Activated CD8-positive, alpha-beta T cell treated with anti-CD3 and anti-CD28 coated beads, Interleukin-2, amount 10 ng/mL, durations not matched to agents 7 days and 5 days (primary cell): ENCODE measurements at regions of chr15 and their contacts with region 1.

Region 1: GRCh38 chr15:74906446-74907162 is at the start of gene FAM219B:
- DNase-seq: peak; percentile 88
- ATAC-seq: peak; percentile 89
- H3K4me3 Mint-ChIP-seq: peak within 1 kb of the TSS; percentile 92
- H3K27ac Mint-ChIP-seq: peak within 1 kb of the TSS; percentile 92
- H3K4me1 Mint-ChIP-seq: peaks cover 40% of the 10 kb centered on the region
- H3K27me3 Mint-ChIP-seq: no peaks in the 10 kb centered on the region
- total RNA-seq, gene FAM219B: 61.3 to 72.5 TPM

Region 2: DNA sequence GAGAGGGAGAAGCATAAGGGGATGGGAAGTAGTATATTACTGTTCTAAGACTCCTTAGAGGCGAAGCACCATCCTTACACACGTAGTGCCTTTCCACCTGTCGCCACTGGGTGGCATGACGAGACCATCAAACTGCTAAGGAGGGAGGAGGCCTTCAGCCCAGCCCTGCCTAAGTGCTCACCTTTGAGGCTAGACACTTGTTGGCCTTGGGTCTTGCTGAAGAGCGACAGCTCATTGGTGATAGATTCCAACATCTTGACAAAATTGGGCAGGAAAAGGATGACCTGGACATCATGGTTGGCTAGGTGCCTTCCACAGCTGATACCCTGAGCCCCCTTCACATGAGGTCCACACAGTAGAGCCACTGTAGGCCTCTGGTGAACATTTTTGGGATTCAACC is 271.4 kb before region 1 on chr15:
- CTCF ChIA-PET with region 1: interaction called, 16 read pairs
- POLR2A ChIA-PET with region 1: no interaction called
- DNase-seq: peak; percentile 83
- ATAC-seq: peak; percentile 87
- H3K4me3 Mint-ChIP-seq: no peak overlapping the region
- H3K27ac Mint-ChIP-seq: no peak overlapping the region
- H3K4me1 Mint-ChIP-seq: no peaks in the 10 kb centered on the region
- H3K27me3 Mint-ChIP-seq: no peaks in the 10 kb centered on the region

Region 3: GRCh38 chr15:74787251-74788041 is 119.2 kb before region 1 on chr15:
- CTCF ChIA-PET with region 1: interaction called, 19 read pairs
- POLR2A ChIA-PET with region 1: interaction called, 5 read pairs
- DNase-seq: peak; percentile 97
- ATAC-seq: peak; percentile 72
- H3K4me3 Mint-ChIP-seq: peak overlapping the region; percentile 90
- H3K27ac Mint-ChIP-seq: peak overlapping the region; percentile 99
- H3K4me1 Mint-ChIP-seq: peaks cover 66% of the 10 kb centered on the region
- H3K27me3 Mint-ChIP-seq: no peaks in the 10 kb centered on the region

Region 4: DNA sequence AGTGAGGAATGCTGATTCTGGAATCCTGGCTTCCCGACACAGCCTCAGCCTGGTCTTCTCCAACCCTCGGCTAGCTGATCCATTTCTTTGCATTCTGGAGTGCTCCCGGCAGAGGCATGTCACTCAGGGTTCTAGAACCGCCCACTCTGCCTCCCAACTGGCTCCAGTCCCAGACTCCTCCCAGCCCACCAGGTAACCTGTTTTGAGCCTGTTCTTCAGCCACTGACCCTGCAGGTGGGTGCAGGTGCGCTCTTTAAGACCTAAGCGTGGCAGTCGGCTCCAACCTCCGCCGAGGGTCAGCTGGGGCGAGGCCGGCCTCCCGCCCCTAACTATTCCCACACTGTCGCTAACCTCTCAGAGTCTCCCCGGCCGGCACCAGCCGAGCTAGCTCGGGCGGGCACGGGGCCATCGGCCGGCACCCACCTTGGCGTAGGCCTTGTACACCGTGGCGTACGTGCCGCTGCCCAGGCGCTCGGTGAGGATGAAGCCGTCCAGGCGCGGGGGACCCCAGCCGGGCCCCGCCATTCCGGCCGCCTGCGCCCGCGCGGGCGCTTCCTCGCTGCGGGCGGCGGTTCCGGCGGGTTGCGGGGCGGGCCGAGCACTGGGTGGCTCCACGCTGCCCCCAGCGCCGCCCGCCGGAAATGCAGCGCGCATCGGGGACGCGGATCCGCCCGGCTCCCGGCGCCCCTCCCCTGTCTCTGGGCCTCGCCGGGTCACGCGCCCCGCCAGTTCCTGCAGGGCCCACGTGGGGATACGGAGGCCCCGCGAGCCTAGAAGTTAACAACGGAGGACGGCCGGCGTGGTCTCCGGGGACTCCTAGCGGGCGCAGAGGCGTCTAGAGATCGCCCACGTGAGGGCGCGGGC is 63.8 kb before region 1 on chr15 and contains the start of gene ULK3:
- CTCF ChIA-PET with region 1: interaction called, 75 read pairs
- POLR2A ChIA-PET with region 1: interaction called, 13 read pairs
- DNase-seq: peak; percentile 94
- ATAC-seq: peak; percentile 87
- H3K4me3 Mint-ChIP-seq: peak within 1 kb of the TSS; percentile 89
- H3K27ac Mint-ChIP-seq: peak within 1 kb of the TSS; percentile 93
- H3K4me1 Mint-ChIP-seq: peaks cover 49% of the 10 kb centered on the region
- H3K27me3 Mint-ChIP-seq: no peaks in the 10 kb centered on the region
- total RNA-seq, gene ULK3: 56.9 to 58.0 TPM

Region 5: DNA sequence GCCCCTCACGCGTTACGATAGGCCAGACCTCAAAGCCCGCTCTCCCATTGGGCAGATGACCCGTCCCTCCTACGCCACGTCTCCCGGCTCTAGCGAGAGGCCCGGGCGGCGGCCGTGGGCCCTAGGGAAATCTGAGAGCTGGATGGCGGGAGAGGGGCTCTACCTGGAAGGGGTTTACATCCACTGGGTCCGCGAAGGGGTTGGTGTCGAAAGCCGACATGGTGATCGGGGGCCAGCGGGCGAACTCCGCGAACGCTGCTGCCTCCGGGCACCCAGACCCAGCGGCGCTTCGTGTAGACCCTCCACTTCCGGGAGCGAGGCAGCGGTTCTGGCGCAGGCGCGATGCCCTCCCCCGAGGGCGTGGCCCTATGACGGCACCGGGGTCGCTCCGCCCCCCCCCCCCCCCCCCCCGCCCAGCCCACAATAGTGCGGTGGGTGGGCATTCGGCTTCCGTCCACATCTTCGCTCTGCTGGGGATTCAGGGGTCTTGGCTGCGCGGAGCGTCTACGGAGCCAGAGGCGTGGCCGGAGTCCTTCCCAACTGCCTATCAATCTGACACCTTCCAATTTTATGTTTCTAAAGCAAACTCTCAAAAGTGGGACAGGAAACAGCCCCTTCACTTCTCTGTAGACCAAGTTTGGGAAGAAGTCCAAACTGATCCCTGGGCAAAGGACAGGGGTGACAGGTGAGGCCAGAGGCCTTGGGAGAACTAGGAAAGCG is 33.4 kb before region 1 on chr15 and contains the start of gene SCAMP2:
- CTCF ChIA-PET with region 1: interaction called, 82 read pairs
- POLR2A ChIA-PET with region 1: interaction called, 18 read pairs
- DNase-seq: peak; percentile 95
- ATAC-seq: peak; percentile 96
- H3K4me3 Mint-ChIP-seq: peak within 1 kb of the TSS; percentile 99
- H3K27ac Mint-ChIP-seq: peak within 1 kb of the TSS; percentile 94
- H3K4me1 Mint-ChIP-seq: peaks cover 44% of the 10 kb centered on the region
- H3K27me3 Mint-ChIP-seq: peaks cover 6% of the 10 kb centered on the region
- total RNA-seq, gene SCAMP2: 96.9 to 105 TPM

Region 6: GRCh38 chr15:74889883-74890664 is 16.5 kb before region 1 on chr15 and contains the start of gene MPI:
- CTCF ChIA-PET with region 1: interaction called, 41 read pairs
- POLR2A ChIA-PET with region 1: interaction called, 6 read pairs
- DNase-seq: peak; percentile 90
- ATAC-seq: peak; percentile 97
- H3K4me3 Mint-ChIP-seq: peak within 1 kb of the TSS; percentile 91
- H3K27ac Mint-ChIP-seq: peak within 1 kb of the TSS; percentile 89
- H3K4me1 Mint-ChIP-seq: peaks cover 50% of the 10 kb centered on the region
- H3K27me3 Mint-ChIP-seq: no peaks in the 10 kb centered on the region
- total RNA-seq, gene MPI: 55.7 to 56.7 TPM

Region 7: GRCh38 chr15:75036314-75036649 is 129.7 kb after region 1 on chr15:
- CTCF ChIA-PET with region 1: no interaction called
- POLR2A ChIA-PET with region 1: no interaction called
- DNase-seq: no peak
- ATAC-seq: no peak
- H3K4me3 Mint-ChIP-seq: no peak overlapping the region
- H3K27ac Mint-ChIP-seq: peak overlapping the region; percentile 69
- H3K4me1 Mint-ChIP-seq: peaks cover 70% of the 10 kb centered on the region
- H3K27me3 Mint-ChIP-seq: no peaks in the 10 kb centered on the region